Activated naive CD4-positive, alpha-beta T cell treated with anti-CD3 and anti-CD28 coated beads for 36 hours (primary cell): ENCODE measurements at regions of chr14 and their contacts with region 1.

Region 1: GRCh38 chr14:23929822-23930294 is 23.7 kb upstream of the DHRS4 start:
- DNase-seq: peak; percentile 93
- H3K4me3 Mint-ChIP-seq: no peak overlapping the region
- H3K27ac Mint-ChIP-seq: no peak overlapping the region
- H3K4me1 Mint-ChIP-seq: no peaks in the 10 kb centered on the region
- H3K27me3 Mint-ChIP-seq: peaks cover 2% of the 10 kb centered on the region

Region 2: DNA sequence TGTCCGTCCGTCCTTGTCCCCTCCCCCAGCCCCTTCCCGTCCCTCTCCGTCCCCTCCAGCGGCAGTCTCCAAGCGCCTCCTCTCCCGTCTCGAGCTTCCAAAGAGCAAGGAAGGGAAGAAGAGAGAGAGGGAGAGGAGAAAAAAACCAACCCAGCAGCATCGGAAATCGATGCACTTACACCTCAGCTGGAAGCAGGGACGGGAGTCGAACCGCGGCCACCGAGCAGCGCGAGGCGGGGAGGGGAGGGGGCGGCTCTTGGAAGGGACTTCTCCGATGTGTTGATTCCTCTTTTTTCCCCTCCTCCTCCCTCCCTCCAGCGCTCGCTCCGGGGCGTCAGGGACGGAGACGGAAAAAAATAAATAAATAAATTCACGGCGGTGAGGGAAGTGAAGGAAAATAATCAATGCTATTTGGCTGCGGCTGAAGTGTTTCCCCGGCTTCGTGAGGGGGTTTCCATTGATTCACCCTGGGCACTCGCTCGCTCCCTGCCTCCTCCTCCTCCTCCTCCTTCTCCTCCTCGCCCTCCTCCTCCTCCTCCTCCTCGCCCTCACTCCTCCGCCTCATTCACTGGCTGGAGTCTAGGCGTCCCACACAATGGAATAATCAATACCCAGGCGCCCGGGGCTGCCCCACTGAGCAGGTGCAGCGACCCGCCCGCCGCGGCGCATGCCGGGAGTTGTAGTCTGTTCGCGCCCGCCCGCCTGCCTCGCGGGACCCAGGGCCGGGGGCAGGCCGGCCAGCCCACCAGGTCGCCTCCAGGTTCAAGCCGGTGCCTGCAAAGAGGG is 378.5 kb before region 1 on chr14 and contains the start of gene ZFHX2:
- CTCF ChIA-PET with region 1: no interaction called
- intact Hi-C with region 1: no loop called
- DNase-seq: peak; percentile 85
- H3K4me3 Mint-ChIP-seq: no peak within 1 kb of the TSS
- H3K27ac Mint-ChIP-seq: peak within 1 kb of the TSS; percentile 80
- H3K4me1 Mint-ChIP-seq: peaks cover 7% of the 10 kb centered on the region
- H3K27me3 Mint-ChIP-seq: no peaks in the 10 kb centered on the region
- total RNA-seq, gene ZFHX2: 0.36 to 0.57 TPM

Region 3: DNA sequence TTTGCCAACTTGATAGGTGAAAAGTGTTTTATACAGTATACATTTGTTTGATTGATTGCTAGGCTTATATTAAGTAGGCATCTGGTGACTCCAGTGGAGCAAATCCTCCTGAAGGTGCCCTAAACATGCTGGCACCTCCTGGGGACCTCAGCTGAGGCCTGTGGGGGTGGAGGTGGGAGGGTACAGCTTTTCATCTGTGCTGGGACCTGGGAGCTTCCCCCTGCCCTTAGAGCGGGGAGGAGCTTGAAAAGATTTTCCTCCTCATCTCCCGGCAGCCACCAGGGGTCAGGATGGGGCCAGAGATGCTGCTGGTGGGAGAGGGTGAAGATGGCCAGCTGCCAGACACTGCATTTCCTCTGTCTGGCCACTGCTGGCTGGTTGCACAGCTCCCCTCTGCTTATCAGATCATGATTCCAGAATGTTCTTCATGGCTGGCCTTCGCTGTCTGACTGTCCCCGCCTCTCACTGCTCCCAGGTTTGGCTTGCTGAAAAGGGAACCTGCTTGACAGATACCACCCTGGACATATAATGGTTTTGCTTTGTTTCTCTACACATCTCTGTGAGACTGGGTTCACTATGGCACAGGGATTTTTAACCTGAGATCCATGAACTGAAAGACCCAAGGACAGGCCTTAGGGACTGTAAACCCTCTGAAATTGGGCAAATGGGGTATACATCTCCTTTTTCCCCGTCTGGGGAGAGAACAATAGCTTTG is 340.8 kb before region 1 on chr14:
- CTCF ChIA-PET with region 1: interaction called, 22 read pairs
- intact Hi-C with region 1: loop called (anchors 1 kb)
- DNase-seq: peak; percentile 91
- H3K4me3 Mint-ChIP-seq: no peak overlapping the region
- H3K27ac Mint-ChIP-seq: no peak overlapping the region
- H3K4me1 Mint-ChIP-seq: peaks cover 3% of the 10 kb centered on the region
- H3K27me3 Mint-ChIP-seq: peaks cover 15% of the 10 kb centered on the region

Region 4: GRCh38 chr14:23665375-23666192 is 264.3 kb before region 1 on chr14:
- CTCF ChIA-PET with region 1: interaction called, 3 read pairs
- intact Hi-C with region 1: loop called (anchors 1 kb)
- DNase-seq: peak; percentile 55
- H3K4me3 Mint-ChIP-seq: no peak overlapping the region
- H3K27ac Mint-ChIP-seq: no peak overlapping the region
- H3K4me1 Mint-ChIP-seq: no peaks in the 10 kb centered on the region
- H3K27me3 Mint-ChIP-seq: no peaks in the 10 kb centered on the region

Region 5: DNA sequence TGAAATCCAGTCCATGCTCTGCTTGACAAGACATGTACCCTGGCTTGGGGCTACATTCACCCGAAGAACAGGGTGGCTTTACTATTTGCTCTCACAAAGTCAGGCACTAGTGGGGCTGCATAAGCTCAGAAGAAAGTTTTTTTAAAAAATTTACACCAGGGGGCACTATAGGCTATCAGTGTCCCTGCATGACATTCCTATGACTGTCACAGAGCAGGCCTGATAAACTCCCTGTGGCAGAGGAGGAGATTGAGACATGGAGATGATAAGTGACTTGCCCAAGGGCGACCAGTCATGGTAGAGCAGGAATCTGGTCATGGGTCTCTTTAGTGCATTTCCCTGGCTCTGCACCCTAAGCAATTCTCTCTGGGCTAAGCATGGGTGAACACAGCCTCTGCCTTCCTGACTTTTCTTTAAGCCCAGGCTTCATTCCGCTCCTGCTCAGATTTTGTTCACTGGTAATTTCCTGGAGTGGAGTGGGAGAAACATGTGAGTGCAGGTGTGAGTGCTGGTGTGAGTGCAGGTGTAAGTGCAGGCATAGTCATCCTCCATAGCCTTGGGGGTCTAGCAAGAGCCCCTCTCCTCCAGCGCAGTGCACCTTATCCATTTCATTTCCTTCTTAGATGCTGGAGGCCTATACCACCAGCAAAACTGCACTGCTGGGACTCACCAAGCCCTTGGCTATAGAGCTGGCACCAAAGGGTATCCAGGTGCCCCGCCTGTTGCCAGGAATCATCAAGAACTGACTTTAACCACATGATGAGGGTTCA is 202.1 kb before region 1 on chr14:
- CTCF ChIA-PET with region 1: interaction called, 6 read pairs
- intact Hi-C with region 1: loop called (anchors 1 kb)
- DNase-seq: no peak
- H3K4me3 Mint-ChIP-seq: no peak overlapping the region
- H3K27ac Mint-ChIP-seq: no peak overlapping the region
- H3K4me1 Mint-ChIP-seq: no peaks in the 10 kb centered on the region
- H3K27me3 Mint-ChIP-seq: no peaks in the 10 kb centered on the region

Region 6: GRCh38 chr14:23895480-23895879 is 34.4 kb before region 1 on chr14:
- CTCF ChIA-PET with region 1: interaction called, 3 read pairs
- intact Hi-C with region 1: loop called (anchors 2 kb)
- DNase-seq: no peak
- H3K4me3 Mint-ChIP-seq: no peak overlapping the region
- H3K27ac Mint-ChIP-seq: no peak overlapping the region
- H3K4me1 Mint-ChIP-seq: no peaks in the 10 kb centered on the region
- H3K27me3 Mint-ChIP-seq: no peaks in the 10 kb centered on the region

Region 7: DNA sequence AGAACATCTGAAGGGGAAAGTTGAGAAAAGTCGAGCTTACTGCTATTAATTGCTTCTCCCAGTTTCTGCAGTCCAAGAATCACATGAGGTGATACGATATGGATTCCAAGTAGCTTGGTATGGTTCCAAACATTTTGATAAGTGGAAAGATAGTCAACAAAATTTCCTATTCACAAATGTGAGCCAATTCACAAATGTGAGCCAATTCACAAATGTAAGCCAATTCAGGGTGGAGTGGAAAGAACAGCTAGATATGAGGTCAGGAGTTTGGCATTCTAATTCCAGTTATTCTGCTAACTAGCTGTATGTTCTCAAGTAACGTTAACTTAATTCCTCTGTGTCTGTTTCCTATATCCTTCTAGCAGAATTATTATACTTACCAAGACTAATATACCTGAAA is 13.9 kb before region 1 on chr14:
- CTCF ChIA-PET with region 1: interaction called, 11 read pairs
- intact Hi-C with region 1: no loop called
- DNase-seq: no peak
- H3K4me3 Mint-ChIP-seq: no peak overlapping the region
- H3K27ac Mint-ChIP-seq: no peak overlapping the region
- H3K4me1 Mint-ChIP-seq: no peaks in the 10 kb centered on the region
- H3K27me3 Mint-ChIP-seq: no peaks in the 10 kb centered on the region

Region 8: GRCh38 chr14:23953464-23954278 is 23.8 kb after region 1 on chr14 and contains the start of gene DHRS4:
- CTCF ChIA-PET with region 1: interaction called, 5 read pairs
- intact Hi-C with region 1: loop called (anchors 1 kb)
- DNase-seq: peak; percentile 87
- H3K4me3 Mint-ChIP-seq: peak within 1 kb of the TSS; percentile 99
- H3K27ac Mint-ChIP-seq: peak within 1 kb of the TSS; percentile 94
- H3K4me1 Mint-ChIP-seq: peaks cover 22% of the 10 kb centered on the region
- H3K27me3 Mint-ChIP-seq: no peaks in the 10 kb centered on the region
- total RNA-seq, gene DHRS4: 22.8 to 24.0 TPM

Region 9: DNA sequence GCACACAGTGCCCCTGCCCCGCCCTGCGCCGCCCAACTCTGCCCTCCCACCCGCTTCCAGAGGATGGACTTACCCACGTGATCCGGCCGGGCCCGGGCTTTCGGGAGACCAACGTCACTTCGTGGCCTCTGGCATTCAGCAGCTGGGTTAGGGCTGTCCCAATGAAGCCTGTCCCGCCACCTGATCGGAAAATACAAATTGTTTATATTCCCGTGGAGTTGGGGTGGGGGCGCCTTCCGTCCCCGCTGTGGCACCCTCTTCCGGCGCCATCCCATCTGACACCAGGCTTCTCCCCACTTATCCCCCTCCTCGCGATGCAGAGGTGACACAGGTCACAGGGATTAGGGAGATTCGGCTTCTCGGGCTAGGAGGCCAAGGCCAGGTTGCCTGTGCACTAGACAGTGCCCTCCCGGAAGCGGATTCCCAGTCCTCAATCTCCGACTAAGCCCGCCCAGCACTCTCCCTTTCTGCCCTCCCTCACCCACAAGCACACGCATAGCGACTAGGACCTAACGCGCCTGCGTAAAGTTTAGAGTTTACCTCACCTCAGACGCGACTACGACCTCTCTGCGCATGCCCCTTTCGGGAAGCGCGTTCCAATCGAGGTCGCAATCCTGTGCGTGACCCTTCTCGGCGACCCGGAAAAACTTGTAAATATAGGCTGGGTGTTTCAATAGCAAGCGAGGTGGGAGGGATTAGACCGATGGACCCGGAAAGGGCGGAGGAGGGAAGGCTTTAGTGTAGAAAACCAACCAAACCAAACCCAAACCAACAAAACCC is 512.6 kb after region 1 on chr14 and contains the start of gene SDR39U1:
- CTCF ChIA-PET with region 1: no interaction called
- intact Hi-C with region 1: no loop called
- DNase-seq: peak; percentile 99
- H3K4me3 Mint-ChIP-seq: peak within 1 kb of the TSS; percentile 89
- H3K27ac Mint-ChIP-seq: peak within 1 kb of the TSS; percentile 98
- H3K4me1 Mint-ChIP-seq: peaks cover 39% of the 10 kb centered on the region
- H3K27me3 Mint-ChIP-seq: no peaks in the 10 kb centered on the region
- total RNA-seq, gene SDR39U1: 70.5 to 72.4 TPM